Astrocyte of the cerebellum (primary cell): ENCODE measurements at regions of chr1 and their contacts with region 1.

Region 1: DNA sequence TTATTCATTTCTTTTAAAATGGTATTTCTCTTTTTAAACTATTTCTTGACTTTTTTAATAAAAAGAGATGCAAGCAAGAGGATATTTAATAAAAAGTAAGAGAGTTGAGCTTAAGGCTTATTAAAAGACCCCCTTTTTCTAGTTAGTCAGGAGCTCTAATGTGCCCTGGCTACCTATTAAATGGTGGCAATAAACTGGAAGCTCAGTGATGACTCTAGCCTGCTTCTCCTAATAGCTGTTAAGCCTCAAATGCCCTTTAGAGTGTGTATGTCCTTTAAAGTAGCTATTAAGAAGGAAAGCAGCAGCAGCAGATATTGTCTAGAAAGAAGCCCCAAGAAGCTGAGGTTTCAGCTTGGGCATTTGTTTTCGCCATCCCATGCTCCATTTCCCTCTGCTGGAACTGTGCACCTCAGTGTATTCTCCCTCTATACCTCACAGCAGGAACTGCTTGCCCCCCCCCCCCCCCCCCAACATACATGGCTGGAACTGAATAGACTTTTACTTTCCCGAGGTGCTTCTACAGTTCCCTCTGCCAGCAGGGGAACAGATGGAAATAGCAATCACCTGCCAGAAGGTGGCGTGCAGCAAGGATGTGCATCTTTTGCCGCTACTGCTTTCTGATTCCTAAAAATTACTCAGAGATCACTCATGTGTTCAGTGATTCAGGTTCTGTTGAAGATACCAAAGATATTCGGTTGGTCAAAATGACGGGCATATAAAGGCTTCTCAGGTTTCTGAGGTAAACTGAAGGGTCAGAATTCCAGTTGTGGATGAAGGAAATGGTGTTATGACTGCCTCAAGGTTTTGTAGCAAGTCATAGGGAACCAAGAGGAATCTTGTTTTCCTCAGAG is 2.5 kb downstream of the RGS4 start:
- DNase-seq: peak; percentile 83
- H3K4me3 ChIP-seq: peak overlapping the region; percentile 63
- CTCF ChIP-seq: peak; percentile 78

Region 2: DNA sequence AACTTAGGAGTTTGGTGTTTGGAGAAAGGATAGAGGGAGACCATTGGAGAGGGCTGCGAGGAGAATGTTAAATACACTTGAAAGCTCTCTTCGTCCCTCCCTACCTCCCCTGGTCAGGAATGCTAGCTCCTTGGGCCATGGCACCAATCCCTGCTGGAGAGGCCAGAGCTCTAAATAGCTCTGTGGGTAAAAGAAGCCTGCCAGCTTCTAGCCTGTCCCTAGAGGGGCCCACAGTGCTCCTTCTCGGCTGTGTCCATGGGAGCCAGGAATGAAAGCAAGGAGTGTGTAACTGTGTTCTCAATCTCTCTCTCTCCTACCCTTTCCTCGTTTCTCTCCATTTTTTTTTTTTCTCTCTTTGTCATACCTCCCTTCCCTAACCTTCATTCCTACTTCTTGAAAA is 210.5 kb before region 1 on chr1 and contains the start of gene CCDC190:
- in situ Hi-C with region 1: loop called (anchors 5 kb)
- DNase-seq: no peak
- H3K4me3 ChIP-seq: no peak within 1 kb of the TSS
- CTCF ChIP-seq: no peak

Region 3: DNA sequence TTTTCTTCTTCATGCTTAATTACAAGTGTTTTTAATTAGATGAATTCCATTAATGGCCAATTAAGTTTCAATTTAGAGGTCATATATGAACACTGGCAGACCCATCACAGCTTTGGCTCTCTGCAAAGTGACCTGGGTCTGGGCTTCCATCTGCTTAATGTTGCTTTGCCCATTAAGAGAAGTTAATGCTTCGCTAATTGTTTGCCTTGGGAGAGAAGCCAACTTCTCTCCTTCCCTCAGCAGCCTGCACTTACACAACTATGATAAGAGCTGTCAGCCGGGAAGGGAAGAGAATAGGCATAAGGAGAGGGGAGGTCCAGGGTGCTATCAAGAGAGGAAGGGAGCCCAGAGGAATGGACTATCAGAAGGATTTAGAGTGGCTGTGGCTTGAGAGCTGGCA is 181.6 kb before region 1 on chr1:
- in situ Hi-C with region 1: loop called (anchors 5 kb)
- DNase-seq: no peak
- H3K4me3 ChIP-seq: no peak overlapping the region
- CTCF ChIP-seq: no peak

Region 4: DNA sequence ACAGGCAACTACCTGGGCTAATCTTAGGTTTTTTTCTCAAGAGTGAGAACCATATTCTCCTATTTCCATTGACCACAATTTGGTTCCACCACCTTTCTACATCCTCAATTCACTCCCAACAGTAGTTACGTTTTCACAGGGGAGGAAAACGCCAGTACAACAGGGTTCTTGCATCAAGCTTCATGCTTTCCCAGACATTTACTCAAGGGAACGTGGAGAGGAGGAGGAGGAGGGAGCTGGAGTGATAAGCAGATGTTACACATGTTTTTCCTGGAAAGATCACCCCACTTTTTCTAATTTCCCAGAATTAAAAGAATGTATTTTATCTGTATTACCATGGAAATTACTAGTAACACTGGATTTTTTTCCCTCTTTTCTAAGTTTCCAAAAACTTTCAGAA is 72.8 kb after region 1 on chr1:
- in situ Hi-C with region 1: no loop called
- DNase-seq: no peak
- H3K4me3 ChIP-seq: no peak overlapping the region
- CTCF ChIP-seq: no peak

Region 5: GRCh38 chr1:163174524-163175437 is 103.2 kb after region 1 on chr1:
- in situ Hi-C with region 1: loop called (anchors 5 kb)
- DNase-seq: peak; percentile 44
- H3K4me3 ChIP-seq: no peak overlapping the region
- CTCF ChIP-seq: peak; percentile 88

Region 6: GRCh38 chr1:163315773-163316374 is 244.2 kb after region 1 on chr1:
- in situ Hi-C with region 1: loop called (anchors 10 kb)
- DNase-seq: peak; percentile 38
- H3K4me3 ChIP-seq: no peak overlapping the region
- CTCF ChIP-seq: no peak